Vagina (tissue), 2 donors: ENCODE measurements at regions of chr17 and their contacts with region 1.

Region 1: GRCh38 chr17:81101614-81102306 is 63.5 kb upstream of the PVALEF start:
- DNase-seq: no peak
- H3K4me3 ChIP-seq: no peak overlapping the region
- H3K27ac ChIP-seq: no peak overlapping the region
- H3K4me1 ChIP-seq: peaks cover 18% of the 10 kb centered on the region
- H3K27me3 ChIP-seq: no peaks in the 10 kb centered on the region
- CTCF ChIP-seq: peak; percentile 95 to 99 (median 99)
- POLR2A ChIP-seq: no peak

Region 2: GRCh38 chr17:80441133-80441578 is 660.6 kb before region 1 on chr17:
- intact Hi-C with region 1: loop called (anchors 10 kb)
- DNase-seq: no peak
- H3K4me3 ChIP-seq: no peak overlapping the region
- H3K27ac ChIP-seq: no peak overlapping the region
- H3K4me1 ChIP-seq: no peaks in the 10 kb centered on the region
- H3K27me3 ChIP-seq: no peaks in the 10 kb centered on the region
- CTCF ChIP-seq: no peak
- POLR2A ChIP-seq: no peak

Region 3: GRCh38 chr17:80991645-80992076 is 110.1 kb before region 1 on chr17 and contains the start of gene CHMP6:
- intact Hi-C with region 1: loop called (anchors 2 kb)
- DNase-seq: no peak
- H3K4me3 ChIP-seq: peak within 1 kb of the TSS; percentile 86 to 88
- H3K27ac ChIP-seq: peak within 1 kb of the TSS; percentile 81
- H3K4me1 ChIP-seq: peaks cover 30% of the 10 kb centered on the region
- H3K27me3 ChIP-seq: no peaks in the 10 kb centered on the region
- CTCF ChIP-seq: peak in 2 of 3 experiments; percentile 18 to 52
- POLR2A ChIP-seq: peak in 1 of 2 donors; percentile 19
- total RNA-seq, gene CHMP6: 31.7 TPM

Region 4: DNA sequence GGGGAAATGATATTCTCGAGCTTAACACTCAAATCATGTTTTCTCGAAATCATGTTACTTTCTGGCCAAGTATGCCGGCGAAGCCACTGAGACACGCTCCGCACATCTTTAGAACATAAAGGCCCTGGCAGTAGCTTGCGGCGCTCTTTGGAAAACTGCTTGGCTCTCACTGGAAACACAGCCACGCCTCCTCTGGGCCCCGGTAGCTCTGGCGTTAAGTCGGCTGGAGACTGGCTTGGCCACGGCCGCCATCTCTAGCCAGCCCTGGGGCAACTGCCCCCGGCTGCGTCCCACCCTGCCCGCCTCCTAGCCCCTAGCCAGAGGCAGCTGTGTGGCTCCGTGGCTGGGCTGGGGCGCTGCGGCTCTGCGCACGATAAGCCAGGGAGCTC is 76.0 kb before region 1 on chr17:
- intact Hi-C with region 1: loop called (anchors 2 kb)
- DNase-seq: no peak
- H3K4me3 ChIP-seq: no peak overlapping the region
- H3K27ac ChIP-seq: no peak overlapping the region
- H3K4me1 ChIP-seq: peaks cover 43% of the 10 kb centered on the region
- H3K27me3 ChIP-seq: peaks cover 4% of the 10 kb centered on the region
- CTCF ChIP-seq: no peak
- POLR2A ChIP-seq: no peak

Region 5: DNA sequence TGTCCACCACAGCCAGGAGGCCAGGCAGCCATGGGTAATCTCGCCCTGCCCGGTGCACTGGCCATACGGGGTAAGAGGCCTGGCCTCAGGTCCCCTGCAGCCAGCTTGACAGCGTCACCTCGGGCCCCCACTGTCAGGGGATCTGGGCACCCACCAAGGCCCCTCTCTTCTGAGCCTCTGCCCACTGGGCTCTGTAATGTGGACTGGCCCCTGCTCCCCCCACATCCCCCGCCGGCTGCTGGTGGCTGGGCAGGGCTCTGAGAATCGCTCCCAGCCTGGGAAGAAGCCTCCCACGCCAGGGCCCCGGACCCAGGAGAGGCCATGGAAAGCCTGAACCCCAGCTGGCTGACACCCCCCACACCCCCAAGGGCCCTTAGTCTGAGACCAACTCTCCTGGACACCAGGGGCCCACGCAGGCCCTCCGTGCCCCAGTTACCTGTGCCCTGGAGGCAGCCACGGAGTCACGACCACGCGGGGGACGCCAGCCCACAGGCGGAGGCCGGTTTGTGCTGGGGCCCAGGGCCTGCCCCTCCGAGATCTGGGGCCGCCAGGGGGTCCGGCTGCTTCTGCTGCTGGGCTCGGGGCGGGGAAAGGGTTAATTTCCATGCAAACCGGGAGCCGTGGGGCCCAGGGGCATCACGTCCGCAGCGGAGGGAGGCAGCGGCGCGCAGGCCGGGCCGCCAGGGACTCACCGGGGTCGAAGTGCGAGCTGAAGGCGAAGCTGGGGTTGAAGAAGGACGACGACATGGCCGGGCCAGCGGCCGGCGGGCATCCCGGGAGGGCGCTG is 63.7 kb after region 1 on chr17 and contains the start of gene PVALEF:
- intact Hi-C with region 1: no loop called
- DNase-seq: no peak
- H3K4me3 ChIP-seq: peak within 1 kb of the TSS; percentile 28 to 37
- H3K27ac ChIP-seq: no peak within 1 kb of the TSS
- H3K4me1 ChIP-seq: peaks cover 12% of the 10 kb centered on the region
- H3K27me3 ChIP-seq: no peaks in the 10 kb centered on the region
- CTCF ChIP-seq: no peak
- POLR2A ChIP-seq: no peak
- total RNA-seq, gene PVALEF: not detected

Region 6: DNA sequence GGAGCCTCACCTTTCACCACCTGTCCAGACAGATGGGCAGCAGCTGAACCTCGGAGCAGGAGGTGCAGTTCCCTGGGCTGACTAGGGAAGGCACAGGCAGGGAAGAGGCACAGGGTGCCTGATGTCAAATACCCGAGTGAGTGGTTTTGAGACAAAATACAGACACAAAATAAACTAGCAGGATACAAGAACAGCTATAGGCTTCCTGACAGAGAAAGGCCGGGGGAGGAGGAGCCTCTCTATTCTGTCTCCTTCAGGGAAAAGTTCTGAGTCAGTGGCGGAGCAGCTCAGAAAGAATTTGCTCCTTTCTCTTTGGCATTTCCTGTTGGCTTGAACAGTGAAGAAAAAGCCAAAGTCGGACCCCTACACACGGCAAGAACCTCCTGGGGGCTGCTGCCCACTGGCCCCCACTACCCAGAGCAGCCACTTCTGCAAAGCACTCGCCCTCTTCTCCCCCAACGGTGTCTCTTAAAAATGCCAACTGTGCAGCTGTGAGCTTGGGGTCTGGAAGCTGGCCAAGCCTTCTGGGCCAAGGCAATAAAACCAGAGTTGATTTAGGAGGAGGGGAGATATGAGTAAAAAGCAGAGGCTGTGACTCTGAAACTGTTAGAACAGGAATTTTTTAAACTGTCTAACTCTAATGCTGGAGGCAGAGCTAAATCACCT is 464.8 kb after region 1 on chr17:
- intact Hi-C with region 1: no loop called
- DNase-seq: no peak
- H3K4me3 ChIP-seq: peak overlapping the region in 1 of 2 donors; percentile 22
- H3K27ac ChIP-seq: peak overlapping the region; percentile 27
- H3K4me1 ChIP-seq: peaks cover 32% of the 10 kb centered on the region
- H3K27me3 ChIP-seq: no peaks in the 10 kb centered on the region
- CTCF ChIP-seq: no peak
- POLR2A ChIP-seq: no peak